Activated naive CD4-positive, alpha-beta T cell treated with anti-CD3 and anti-CD28 coated beads for 36 hours (primary cell): ENCODE measurements at regions of chr1 and their contacts with region 1.

Region 1: DNA sequence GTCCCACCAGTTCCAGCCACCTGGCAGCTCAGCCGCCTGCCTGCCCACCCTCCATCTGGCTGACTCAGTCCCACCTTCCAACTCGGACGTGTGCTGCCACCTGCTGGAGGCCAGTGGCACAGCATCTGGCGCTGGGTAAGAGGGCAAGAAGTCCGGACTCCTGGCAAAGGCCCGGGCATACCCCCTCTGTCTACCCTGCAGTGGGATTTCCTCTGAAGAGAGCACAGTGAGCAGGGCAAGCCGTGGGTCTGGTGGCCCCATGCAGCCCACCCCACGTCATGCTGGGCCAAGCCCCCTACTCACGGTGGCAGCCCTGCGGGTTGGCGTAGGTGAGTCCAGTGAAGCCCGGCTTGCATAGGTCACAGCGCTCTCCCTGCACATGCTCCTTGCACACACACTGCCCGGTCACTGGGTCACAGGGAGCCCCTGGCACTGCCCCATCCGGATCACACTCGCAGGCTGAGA is 24.5 kb downstream of the LAMB3 start:
- DNase-seq: peak; percentile 89
- H3K4me3 Mint-ChIP-seq: no peak overlapping the region
- H3K27ac Mint-ChIP-seq: no peak overlapping the region
- H3K4me1 Mint-ChIP-seq: peaks cover 15% of the 10 kb centered on the region
- H3K27me3 Mint-ChIP-seq: no peaks in the 10 kb centered on the region

Region 2: GRCh38 chr1:209576798-209577197 is 51.0 kb before region 1 on chr1:
- CTCF ChIA-PET with region 1: interaction called, 24 read pairs
- intact Hi-C with region 1: loop called (anchors 1 kb)
- DNase-seq: peak; percentile 83
- H3K4me3 Mint-ChIP-seq: no peak overlapping the region
- H3K27ac Mint-ChIP-seq: no peak overlapping the region
- H3K4me1 Mint-ChIP-seq: no peaks in the 10 kb centered on the region
- H3K27me3 Mint-ChIP-seq: no peaks in the 10 kb centered on the region

Region 3: DNA sequence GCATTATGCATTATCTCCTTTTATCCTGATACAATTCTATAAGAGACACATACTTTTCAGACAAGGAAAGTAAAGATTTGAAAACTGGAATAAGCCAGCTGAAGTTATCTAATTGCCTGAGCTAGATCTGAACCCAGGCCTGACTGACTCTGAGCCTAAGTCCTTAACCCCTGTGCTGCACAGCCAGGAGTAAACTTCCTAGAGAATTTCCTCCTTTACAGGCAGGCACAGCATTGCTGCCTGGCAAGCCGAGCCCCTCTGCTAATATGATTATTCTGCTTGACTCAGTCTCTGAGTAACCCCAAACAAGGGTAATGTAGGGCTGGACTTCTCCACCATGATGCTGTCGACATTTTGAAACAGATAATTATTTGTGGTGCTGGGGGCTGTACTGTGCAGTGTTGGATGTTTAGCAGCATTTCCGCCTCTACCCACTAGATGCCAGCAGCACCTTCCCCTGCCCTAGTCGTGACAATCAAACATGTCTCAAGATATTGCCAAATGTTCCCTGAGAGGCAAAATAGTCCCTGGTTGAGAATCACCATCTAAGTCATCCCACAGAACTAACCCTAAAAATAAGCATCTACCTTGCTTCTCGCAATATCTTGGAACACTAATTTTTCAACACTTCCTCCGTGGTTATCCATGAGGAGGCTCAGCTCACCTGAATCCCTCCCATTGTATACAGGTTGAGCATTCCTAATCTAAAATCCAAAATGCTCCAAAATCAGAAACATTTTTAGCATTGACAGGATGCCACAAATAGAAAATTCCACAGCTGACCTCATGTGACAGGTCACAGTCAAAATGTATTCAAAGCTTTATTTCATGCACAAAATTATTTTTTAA is 25.7 kb before region 1 on chr1:
- CTCF ChIA-PET with region 1: interaction called, 38 read pairs
- intact Hi-C with region 1: loop called (anchors 1 kb)
- DNase-seq: peak; percentile 73
- H3K4me3 Mint-ChIP-seq: no peak overlapping the region
- H3K27ac Mint-ChIP-seq: no peak overlapping the region
- H3K4me1 Mint-ChIP-seq: peaks cover 11% of the 10 kb centered on the region
- H3K27me3 Mint-ChIP-seq: peaks cover 10% of the 10 kb centered on the region

Region 4: DNA sequence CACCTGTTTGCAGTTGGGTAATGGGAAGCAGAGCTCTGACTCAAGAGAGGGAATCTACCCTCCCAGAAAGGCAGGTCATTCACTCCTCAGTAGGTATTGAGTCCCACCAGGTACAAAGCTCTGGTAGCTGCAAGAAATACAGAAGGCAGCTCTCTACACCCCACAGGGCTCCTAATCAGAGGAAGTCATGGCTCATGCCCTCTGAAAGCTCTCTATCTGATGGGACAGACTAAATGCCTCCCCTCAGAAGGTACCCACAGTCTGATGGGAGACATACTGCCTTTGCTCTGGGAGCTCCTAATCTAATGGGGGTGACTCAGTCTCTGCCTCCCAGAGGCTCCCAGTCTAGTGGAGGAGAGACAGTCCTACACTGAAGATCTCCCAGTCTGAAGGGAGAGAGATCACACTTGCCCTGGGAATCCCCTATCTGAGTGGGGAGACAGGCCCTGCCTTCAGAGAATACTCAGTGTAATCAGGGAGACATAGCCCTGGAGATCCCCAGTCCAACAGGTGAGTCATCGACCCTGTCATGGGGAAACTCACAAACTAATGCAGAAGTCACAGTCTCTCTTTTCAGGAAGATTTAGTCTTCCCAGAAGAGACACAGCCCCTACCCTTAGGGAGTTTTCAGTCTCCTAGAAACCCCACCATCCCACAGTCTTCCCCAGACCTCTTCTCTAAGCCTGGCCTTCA is 20.5 kb before region 1 on chr1:
- CTCF ChIA-PET with region 1: interaction called, 43 read pairs
- intact Hi-C with region 1: loop called (anchors 1 kb)
- DNase-seq: peak; percentile 88
- H3K4me3 Mint-ChIP-seq: peak overlapping the region; percentile 51
- H3K27ac Mint-ChIP-seq: peak overlapping the region; percentile 86
- H3K4me1 Mint-ChIP-seq: peaks cover 11% of the 10 kb centered on the region
- H3K27me3 Mint-ChIP-seq: no peaks in the 10 kb centered on the region

Region 5: DNA sequence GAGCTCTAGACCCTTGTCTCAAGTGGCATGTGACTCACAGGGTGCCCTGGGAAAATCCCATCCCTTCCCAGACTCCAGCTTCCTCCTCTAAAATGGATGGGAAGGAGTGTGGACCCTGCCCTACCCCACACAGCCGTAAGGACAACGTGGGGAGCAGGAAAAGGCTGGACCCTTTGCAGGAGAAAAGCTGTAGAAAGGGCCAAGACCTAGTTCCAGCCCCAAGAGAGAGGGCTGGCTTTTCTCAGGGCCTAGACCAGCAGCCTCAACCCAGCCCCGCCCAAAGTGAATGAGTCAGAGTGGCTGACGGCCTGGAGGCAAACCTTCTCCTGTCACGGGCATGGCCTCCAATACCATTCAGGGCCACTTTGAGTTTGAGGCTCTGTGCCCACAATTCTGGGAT is 23.4 kb after region 1 on chr1:
- CTCF ChIA-PET with region 1: interaction called, 7 read pairs
- intact Hi-C with region 1: loop called (anchors 2 kb)
- DNase-seq: peak; percentile 89
- H3K4me3 Mint-ChIP-seq: peak overlapping the region; percentile 36
- H3K27ac Mint-ChIP-seq: peak overlapping the region; percentile 25
- H3K4me1 Mint-ChIP-seq: peaks cover 50% of the 10 kb centered on the region
- H3K27me3 Mint-ChIP-seq: no peaks in the 10 kb centered on the region